Heart right ventricle (tissue), 16 donors: ENCODE measurements at regions of chr14 and their contacts with region 1.

Region 1: GRCh38 chr14:74362361-74362915 is 14.2 kb downstream of the VRTN start:
- DNase-seq: peak; percentile 76 to 77
- ATAC-seq: peak; percentile 74 to 88 (median 80)
- H3K4me3 ChIP-seq: no peak overlapping the region
- H3K27ac ChIP-seq: no peak overlapping the region
- H3K4me1 ChIP-seq: peaks cover 0 to 3% (median 0%) of the 10 kb centered on the region in 9 donors
- H3K27me3 ChIP-seq: peaks cover 0 to 28% (median 5%) of the 10 kb centered on the region in 7 donors
- CTCF ChIP-seq: peak; percentile 88 to 97 (median 92)

Region 2: DNA sequence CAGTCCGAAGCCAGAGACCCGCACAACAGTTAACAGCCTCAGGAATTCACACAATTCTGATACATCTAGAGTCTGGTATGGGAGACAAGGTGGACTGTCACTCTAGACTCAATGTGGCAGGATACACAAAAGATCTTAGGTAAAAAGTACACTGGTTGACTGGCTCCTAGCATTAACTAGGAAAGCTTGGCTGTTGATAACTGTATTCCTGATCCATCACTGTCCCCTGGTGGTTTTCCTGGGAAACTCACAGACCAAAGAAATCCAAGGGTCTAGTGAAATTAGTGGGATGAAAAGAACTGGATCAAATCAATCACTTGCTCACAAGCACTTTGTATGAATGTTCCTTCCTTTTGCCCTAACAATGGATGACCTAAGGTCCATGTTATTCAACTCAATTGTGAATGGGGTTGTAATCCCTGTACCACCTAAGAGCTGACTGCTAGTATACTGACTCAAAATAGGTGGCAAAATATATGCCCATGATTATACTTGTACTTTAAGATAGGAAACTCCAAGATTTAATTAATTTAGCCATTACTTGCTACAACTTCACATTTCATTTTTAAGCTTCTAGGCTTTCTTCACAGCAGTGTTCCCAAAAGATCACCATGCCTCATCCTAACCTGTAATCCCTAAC is 116.7 kb after region 1 on chr14:
- intact Hi-C with region 1: loop called (anchors 1 to 5 kb)
- DNase-seq: no peak
- ATAC-seq: no peak
- H3K4me3 ChIP-seq: no peak overlapping the region
- H3K27ac ChIP-seq: no peak overlapping the region
- H3K4me1 ChIP-seq: peaks cover 0 to 20% (median 7%) of the 10 kb centered on the region in 9 donors
- H3K27me3 ChIP-seq: no peaks in the 10 kb centered on the region
- CTCF ChIP-seq: peak; percentile 31 to 73 (median 65)

Region 3: DNA sequence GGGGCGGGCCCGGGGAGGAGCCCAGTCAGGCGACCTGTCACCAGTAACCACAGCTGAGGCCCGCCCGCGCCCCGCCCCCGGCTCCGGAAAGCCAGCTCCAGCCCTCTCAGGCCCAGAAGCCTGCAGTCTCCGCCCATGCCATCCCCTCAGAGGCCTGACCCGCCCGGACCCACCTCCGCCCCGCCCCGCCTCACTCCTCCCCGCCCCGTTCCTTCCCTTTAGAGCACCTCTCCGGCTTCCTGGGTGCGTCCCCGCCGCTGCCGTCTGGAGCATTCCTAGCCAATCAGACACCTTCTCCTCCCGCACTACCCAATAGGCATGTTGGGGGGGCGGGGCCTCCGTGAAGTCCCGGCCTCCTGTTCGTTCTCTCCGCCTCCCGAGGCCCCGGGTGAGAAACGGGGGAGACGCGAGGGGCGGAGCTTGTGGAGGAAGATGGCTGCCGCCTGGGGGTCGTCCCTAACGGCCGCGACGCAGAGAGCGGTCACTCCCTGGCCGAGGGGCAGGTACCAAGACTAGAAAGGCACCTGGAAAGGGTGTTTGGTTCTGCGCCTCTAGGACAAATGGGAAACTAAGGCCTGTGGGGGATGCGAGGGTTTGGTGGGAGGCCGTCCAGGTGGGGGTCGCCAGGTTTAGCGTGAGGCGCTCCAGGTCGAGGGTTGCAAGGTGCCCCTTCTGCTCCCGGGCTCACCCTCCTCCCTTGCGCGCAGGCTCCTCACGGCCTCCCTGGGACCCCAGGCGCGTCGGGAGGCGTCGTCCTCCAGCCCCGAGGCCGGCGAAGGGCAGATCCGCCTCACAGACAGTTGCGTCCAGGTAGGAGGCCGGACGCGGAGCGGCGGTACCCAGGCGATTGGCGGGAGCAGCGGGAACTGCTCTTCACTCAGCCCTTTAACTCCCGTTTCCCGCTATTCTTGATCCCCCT is 131.2 kb after region 1 on chr14 and contains the start of gene ISCA2:
- intact Hi-C with region 1: loop called in 1 of 10 experiments (anchors 5 kb)
- DNase-seq: peak; percentile 100
- ATAC-seq: peak; percentile 96 to 98 (median 96)
- H3K4me3 ChIP-seq: peak within 1 kb of the TSS; percentile 66 to 98 (median 88)
- H3K27ac ChIP-seq: peak within 1 kb of the TSS; percentile 79 to 97 (median 92)
- H3K4me1 ChIP-seq: peaks cover 3 to 64% (median 56%) of the 10 kb centered on the region in 9 donors
- H3K27me3 ChIP-seq: no peaks in the 10 kb centered on the region
- CTCF ChIP-seq: no peak
- total RNA-seq, gene ISCA2: 32.0 to 44.3 (median 40.3) TPM

Region 4: GRCh38 chr14:74793506-74794168 is 431.2 kb after region 1 on chr14:
- intact Hi-C with region 1: loop called in 1 of 10 experiments (anchors 10 kb)
- DNase-seq: no peak
- ATAC-seq: no peak
- H3K4me3 ChIP-seq: no peak overlapping the region
- H3K27ac ChIP-seq: peak overlapping the region in 4 of 10 donors; percentile 24 to 55 (median 36)
- H3K4me1 ChIP-seq: peaks cover 7 to 31% (median 28%) of the 10 kb centered on the region in 9 donors
- H3K27me3 ChIP-seq: no peaks in the 10 kb centered on the region
- CTCF ChIP-seq: peak in 6 of 9 donors; percentile 23 to 46 (median 36)